CD4-positive, alpha-beta T cell (primary cell): ENCODE measurements at regions of chr1 and their contacts with region 1.

Region 1: GRCh38 chr1:40404670-40405462 is 31.3 kb downstream of the SMAP2 start:
- DNase-seq: peak in 7 of 14 experiments; percentile 25 to 86 (median 65)
- ATAC-seq: peak; percentile 81
- H3K4me3 ChIP-seq: no peak overlapping the region
- H3K4me3 Mint-ChIP-seq: peak overlapping the region; percentile 50
- H3K27ac ChIP-seq: peak overlapping the region; percentile 33 to 48
- H3K27ac Mint-ChIP-seq: peak overlapping the region; percentile 86
- H3K4me1 ChIP-seq: peaks cover 47% of the 10 kb centered on the region
- H3K4me1 Mint-ChIP-seq: peaks cover 63% of the 10 kb centered on the region
- H3K27me3 ChIP-seq: no peaks in the 10 kb centered on the region
- H3K27me3 Mint-ChIP-seq: no peaks in the 10 kb centered on the region
- CTCF ChIP-seq: peak; percentile 94

Region 2: GRCh38 chr1:39816415-39817090 is 588.3 kb before region 1 on chr1:
- CTCF ChIA-PET with region 1: no interaction called
- POLR2A ChIA-PET with region 1: no interaction called
- intact Hi-C with region 1: no loop called
- DNase-seq: peak; percentile 17 to 84 (median 50)
- ATAC-seq: peak; percentile 63
- H3K4me3 ChIP-seq: peak overlapping the region; percentile 33
- H3K4me3 Mint-ChIP-seq: peak overlapping the region; percentile 42
- H3K27ac ChIP-seq: no peak overlapping the region
- H3K27ac Mint-ChIP-seq: no peak overlapping the region
- H3K4me1 ChIP-seq: peaks cover 15% of the 10 kb centered on the region
- H3K4me1 Mint-ChIP-seq: peaks cover 9% of the 10 kb centered on the region
- H3K27me3 ChIP-seq: peaks cover 0 to 6% of the 10 kb centered on the region in 2 experiments
- H3K27me3 Mint-ChIP-seq: peaks cover 20% of the 10 kb centered on the region
- CTCF ChIP-seq: peak; percentile 74

Region 3: DNA sequence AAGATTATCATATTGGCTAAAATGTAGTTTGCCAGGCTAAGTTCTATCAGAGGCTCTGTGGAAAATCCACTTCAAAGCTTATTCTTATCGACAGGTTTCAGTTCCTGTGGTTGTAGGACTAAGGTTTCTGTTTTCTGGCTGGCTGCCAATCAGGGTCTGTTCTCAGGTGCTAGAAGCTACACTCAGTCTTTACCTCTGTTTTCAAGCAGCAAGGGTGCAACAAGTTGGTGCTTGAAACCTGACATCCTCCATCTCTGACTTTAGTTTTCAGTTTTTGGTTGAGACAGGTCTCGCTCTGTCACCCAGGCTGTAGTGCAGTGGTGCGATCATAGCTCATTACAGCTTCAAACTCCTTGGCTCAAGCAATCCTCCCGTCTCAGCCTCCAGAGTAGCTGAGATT is 172.4 kb before region 1 on chr1:
- CTCF ChIA-PET with region 1: no interaction called
- POLR2A ChIA-PET with region 1: no interaction called
- intact Hi-C with region 1: no loop called
- DNase-seq: peak in 11 of 14 experiments; percentile 11 to 64 (median 24)
- ATAC-seq: peak; percentile 39
- H3K4me3 ChIP-seq: no peak overlapping the region
- H3K4me3 Mint-ChIP-seq: no peak overlapping the region
- H3K27ac ChIP-seq: no peak overlapping the region
- H3K27ac Mint-ChIP-seq: no peak overlapping the region
- H3K4me1 ChIP-seq: peaks cover 9% of the 10 kb centered on the region
- H3K4me1 Mint-ChIP-seq: peaks cover 22% of the 10 kb centered on the region
- H3K27me3 ChIP-seq: no peaks in the 10 kb centered on the region
- H3K27me3 Mint-ChIP-seq: no peaks in the 10 kb centered on the region
- CTCF ChIP-seq: no peak

Region 4: DNA sequence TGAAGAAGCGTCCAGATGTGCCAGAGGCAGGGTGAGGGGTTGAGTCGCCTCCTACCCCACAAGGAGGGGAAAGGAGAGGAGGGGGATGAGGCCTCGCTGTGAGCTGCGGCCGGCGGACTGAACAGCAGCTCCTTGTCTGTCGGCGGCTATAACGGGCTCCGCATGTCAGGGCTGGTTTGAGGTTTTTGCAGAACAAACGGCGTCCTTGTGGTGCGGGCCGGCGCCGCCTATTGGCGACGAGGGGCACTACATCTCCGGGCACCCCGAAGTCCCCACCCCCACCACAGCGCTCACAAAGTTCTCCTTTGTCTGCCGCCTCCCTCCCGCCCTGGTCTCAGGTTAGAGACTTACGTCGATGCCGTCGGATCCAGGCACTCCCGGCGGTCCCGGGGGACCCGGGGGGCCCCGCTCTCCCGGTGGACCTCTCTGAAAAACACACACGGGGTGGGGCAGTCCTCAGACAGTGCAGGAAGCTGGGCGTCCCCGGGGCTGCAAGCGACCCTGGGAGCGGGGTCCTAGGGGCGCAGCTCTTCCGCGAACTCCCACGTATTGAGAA is 89.5 kb before region 1 on chr1:
- CTCF ChIA-PET with region 1: interaction called, 17 read pairs
- POLR2A ChIA-PET with region 1: interaction called, 13 read pairs
- intact Hi-C with region 1: loop called (anchors 1 to 2 kb)
- DNase-seq: peak; percentile 78 to 94 (median 84)
- ATAC-seq: peak; percentile 84
- H3K4me3 ChIP-seq: peak overlapping the region; percentile 77
- H3K4me3 Mint-ChIP-seq: peak overlapping the region; percentile 90
- H3K27ac ChIP-seq: no peak overlapping the region
- H3K27ac Mint-ChIP-seq: peak overlapping the region; percentile 64
- H3K4me1 ChIP-seq: peaks cover 51% of the 10 kb centered on the region
- H3K4me1 Mint-ChIP-seq: peaks cover 37% of the 10 kb centered on the region
- H3K27me3 ChIP-seq: peaks cover 0 to 11% of the 10 kb centered on the region in 2 experiments
- H3K27me3 Mint-ChIP-seq: peaks cover 24% of the 10 kb centered on the region
- CTCF ChIP-seq: peak; percentile 79

Region 5: GRCh38 chr1:40392221-40392620 is 12.6 kb before region 1 on chr1:
- CTCF ChIA-PET with region 1: interaction called, 38 read pairs
- POLR2A ChIA-PET with region 1: interaction called, 51 read pairs
- intact Hi-C with region 1: loop called in 1 of 2 experiments (anchors 1 kb)
- DNase-seq: no peak
- ATAC-seq: no peak
- H3K4me3 ChIP-seq: no peak overlapping the region
- H3K4me3 Mint-ChIP-seq: peak overlapping the region; percentile 89
- H3K27ac ChIP-seq: peak overlapping the region; percentile 72 to 95
- H3K27ac Mint-ChIP-seq: peak overlapping the region; percentile 96
- H3K4me1 ChIP-seq: peaks cover 89% of the 10 kb centered on the region
- H3K4me1 Mint-ChIP-seq: peaks cover 94% of the 10 kb centered on the region
- H3K27me3 ChIP-seq: no peaks in the 10 kb centered on the region
- H3K27me3 Mint-ChIP-seq: no peaks in the 10 kb centered on the region
- CTCF ChIP-seq: no peak

Region 6: DNA sequence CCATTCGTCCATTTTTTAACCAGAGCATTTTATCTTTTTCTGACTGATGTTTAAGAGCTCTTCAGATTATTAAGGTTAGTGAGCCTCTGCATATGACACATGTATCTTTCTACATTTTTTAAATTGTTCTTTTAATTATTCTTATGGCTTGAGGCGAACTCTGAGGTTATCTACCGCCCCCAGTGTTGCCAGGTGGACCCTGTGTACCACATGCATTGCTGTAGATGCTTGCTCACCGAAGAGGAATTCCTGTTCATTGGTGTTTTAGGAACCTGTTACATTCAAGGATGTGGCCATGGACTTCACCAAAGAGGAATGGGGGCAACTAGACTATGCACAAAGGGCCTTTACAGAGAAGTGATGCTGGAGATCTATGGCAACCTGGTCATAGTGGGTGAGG is 158.4 kb after region 1 on chr1:
- CTCF ChIA-PET with region 1: no interaction called
- POLR2A ChIA-PET with region 1: no interaction called
- intact Hi-C with region 1: no loop called
- DNase-seq: no peak
- ATAC-seq: no peak
- H3K4me3 ChIP-seq: no peak overlapping the region
- H3K4me3 Mint-ChIP-seq: no peak overlapping the region
- H3K27ac ChIP-seq: no peak overlapping the region
- H3K27ac Mint-ChIP-seq: no peak overlapping the region
- H3K4me1 ChIP-seq: no peaks in the 10 kb centered on the region
- H3K4me1 Mint-ChIP-seq: no peaks in the 10 kb centered on the region
- H3K27me3 ChIP-seq: no peaks in the 10 kb centered on the region
- H3K27me3 Mint-ChIP-seq: peaks cover 5% of the 10 kb centered on the region
- CTCF ChIP-seq: no peak

Region 7: DNA sequence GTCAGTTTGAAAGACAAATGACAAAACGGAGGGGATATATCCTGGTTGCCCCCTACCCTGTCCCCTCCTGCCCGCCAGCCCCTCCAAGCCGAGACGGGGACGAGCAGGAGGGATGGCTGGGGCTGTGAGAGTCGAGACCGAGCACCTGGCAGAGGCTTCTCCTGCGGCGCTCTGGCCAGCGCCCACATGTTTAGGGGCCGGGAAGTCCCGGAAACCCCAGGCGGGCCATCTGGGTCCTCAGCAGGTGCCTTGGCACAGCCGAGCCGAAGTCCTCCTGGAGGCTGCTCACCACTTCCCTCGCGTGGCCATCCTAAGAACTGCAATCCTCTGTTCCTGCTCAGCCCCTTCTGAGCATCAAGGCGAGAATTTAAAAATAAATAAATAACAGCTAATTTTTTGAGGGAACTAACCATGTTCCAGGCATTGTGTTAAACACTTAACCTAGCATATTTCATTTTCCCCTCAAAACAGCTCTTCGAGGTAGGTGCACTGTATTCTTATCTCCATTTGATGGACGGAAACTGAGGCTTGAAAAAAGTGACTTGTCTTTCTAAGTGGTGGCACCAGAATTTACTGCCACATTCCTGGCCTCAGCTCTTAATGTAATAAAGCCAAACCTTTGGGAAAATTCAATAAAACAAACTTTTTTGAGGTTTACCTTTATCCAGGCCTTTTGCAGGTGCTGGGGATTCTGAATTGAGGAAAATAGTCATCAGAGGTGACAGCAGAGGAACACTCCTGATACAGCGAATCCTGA is 264.1 kb after region 1 on chr1:
- CTCF ChIA-PET with region 1: no interaction called
- POLR2A ChIA-PET with region 1: no interaction called
- intact Hi-C with region 1: no loop called
- DNase-seq: peak; percentile 72 to 91 (median 82)
- ATAC-seq: peak; percentile 78
- H3K4me3 ChIP-seq: peak overlapping the region; percentile 36
- H3K4me3 Mint-ChIP-seq: peak overlapping the region; percentile 69
- H3K27ac ChIP-seq: no peak overlapping the region
- H3K27ac Mint-ChIP-seq: no peak overlapping the region
- H3K4me1 ChIP-seq: peaks cover 23% of the 10 kb centered on the region
- H3K4me1 Mint-ChIP-seq: peaks cover 20% of the 10 kb centered on the region
- H3K27me3 ChIP-seq: no peaks in the 10 kb centered on the region
- H3K27me3 Mint-ChIP-seq: no peaks in the 10 kb centered on the region
- CTCF ChIP-seq: peak; percentile 94